Activated CD8-positive, alpha-beta T cell treated with anti-CD3 and anti-CD28 coated beads for 36 hours (primary cell): ENCODE measurements at regions of chr10 and their contacts with region 1.

Region 1: GRCh38 chr10:50624866-50625692 is 1.3 kb upstream of the SGMS1 start:
- DNase-seq: peak; percentile 77
- ATAC-seq: peak; percentile 47
- H3K4me3 Mint-ChIP-seq: peak overlapping the region; percentile 86
- H3K27ac Mint-ChIP-seq: peak overlapping the region; percentile 92
- H3K4me1 Mint-ChIP-seq: peaks cover 38% of the 10 kb centered on the region
- H3K27me3 Mint-ChIP-seq: no peaks in the 10 kb centered on the region
- CTCF ChIP-seq: peak; percentile 61

Region 2: GRCh38 chr10:50417886-50418830 is 206.9 kb before region 1 on chr10:
- CTCF ChIA-PET with region 1: interaction called, 5 read pairs
- POLR2A ChIA-PET with region 1: interaction called, 5 read pairs
- intact Hi-C with region 1: loop called (anchors 5 kb)
- DNase-seq: peak; percentile 62
- ATAC-seq: peak; percentile 88
- H3K4me3 Mint-ChIP-seq: peak overlapping the region; percentile 77
- H3K27ac Mint-ChIP-seq: peak overlapping the region; percentile 64
- H3K4me1 Mint-ChIP-seq: peaks cover 34% of the 10 kb centered on the region
- H3K27me3 Mint-ChIP-seq: no peaks in the 10 kb centered on the region
- CTCF ChIP-seq: no peak

Region 3: GRCh38 chr10:50431791-50432190 is 193.3 kb before region 1 on chr10:
- CTCF ChIA-PET with region 1: no interaction called
- POLR2A ChIA-PET with region 1: interaction called, 3 read pairs
- intact Hi-C with region 1: loop called (anchors 5 kb)
- DNase-seq: peak; percentile 54
- ATAC-seq: peak; percentile 77
- H3K4me3 Mint-ChIP-seq: peak overlapping the region; percentile 4
- H3K27ac Mint-ChIP-seq: peak overlapping the region; percentile 39
- H3K4me1 Mint-ChIP-seq: peaks cover 31% of the 10 kb centered on the region
- H3K27me3 Mint-ChIP-seq: no peaks in the 10 kb centered on the region
- CTCF ChIP-seq: no peak

Region 4: GRCh38 chr10:50540069-50540825 is 84.8 kb before region 1 on chr10:
- CTCF ChIA-PET with region 1: interaction called, 3 read pairs
- POLR2A ChIA-PET with region 1: interaction called, 3 read pairs
- intact Hi-C with region 1: loop called (anchors 5 kb)
- DNase-seq: peak; percentile 75
- ATAC-seq: peak; percentile 70
- H3K4me3 Mint-ChIP-seq: peak overlapping the region; percentile 51
- H3K27ac Mint-ChIP-seq: peak overlapping the region; percentile 91
- H3K4me1 Mint-ChIP-seq: peaks cover 87% of the 10 kb centered on the region
- H3K27me3 Mint-ChIP-seq: no peaks in the 10 kb centered on the region
- CTCF ChIP-seq: no peak

Region 5: DNA sequence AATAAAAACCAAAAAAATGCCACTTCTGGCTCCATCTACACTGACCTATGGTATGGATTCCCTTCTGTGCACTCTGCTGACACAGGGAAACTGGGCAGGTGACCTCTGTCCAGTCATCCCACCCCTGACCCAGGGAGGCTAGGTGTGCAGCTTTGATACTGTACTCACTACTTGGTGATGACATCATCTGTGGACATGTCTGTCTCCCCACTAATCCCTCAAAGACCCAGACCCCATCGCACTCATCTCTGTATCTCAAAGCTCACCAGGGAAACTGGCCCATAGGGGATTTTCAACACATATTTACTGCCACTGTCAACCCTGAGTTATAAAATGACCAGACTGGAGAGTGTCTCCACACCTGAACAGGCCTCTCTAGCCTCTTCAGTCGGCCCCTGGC is 11.9 kb before region 1 on chr10:
- CTCF ChIA-PET with region 1: interaction called, 11 read pairs
- POLR2A ChIA-PET with region 1: interaction called, 7 read pairs
- intact Hi-C with region 1: no loop called
- DNase-seq: no peak
- ATAC-seq: peak; percentile 47
- H3K4me3 Mint-ChIP-seq: no peak overlapping the region
- H3K27ac Mint-ChIP-seq: no peak overlapping the region
- H3K4me1 Mint-ChIP-seq: peaks cover 32% of the 10 kb centered on the region
- H3K27me3 Mint-ChIP-seq: no peaks in the 10 kb centered on the region
- CTCF ChIP-seq: no peak

Region 6: GRCh38 chr10:50636618-50637579 is 11.8 kb after region 1 on chr10:
- CTCF ChIA-PET with region 1: interaction called, 6 read pairs
- POLR2A ChIA-PET with region 1: interaction called, 20 read pairs
- intact Hi-C with region 1: no loop called
- DNase-seq: peak; percentile 65
- ATAC-seq: peak; percentile 94
- H3K4me3 Mint-ChIP-seq: peak overlapping the region; percentile 39
- H3K27ac Mint-ChIP-seq: peak overlapping the region; percentile 40
- H3K4me1 Mint-ChIP-seq: peaks cover 28% of the 10 kb centered on the region
- H3K27me3 Mint-ChIP-seq: peaks cover 7% of the 10 kb centered on the region
- CTCF ChIP-seq: no peak